ENCODE measurements at regions of chr9 and their contacts with region 1.

Region 1: DNA sequence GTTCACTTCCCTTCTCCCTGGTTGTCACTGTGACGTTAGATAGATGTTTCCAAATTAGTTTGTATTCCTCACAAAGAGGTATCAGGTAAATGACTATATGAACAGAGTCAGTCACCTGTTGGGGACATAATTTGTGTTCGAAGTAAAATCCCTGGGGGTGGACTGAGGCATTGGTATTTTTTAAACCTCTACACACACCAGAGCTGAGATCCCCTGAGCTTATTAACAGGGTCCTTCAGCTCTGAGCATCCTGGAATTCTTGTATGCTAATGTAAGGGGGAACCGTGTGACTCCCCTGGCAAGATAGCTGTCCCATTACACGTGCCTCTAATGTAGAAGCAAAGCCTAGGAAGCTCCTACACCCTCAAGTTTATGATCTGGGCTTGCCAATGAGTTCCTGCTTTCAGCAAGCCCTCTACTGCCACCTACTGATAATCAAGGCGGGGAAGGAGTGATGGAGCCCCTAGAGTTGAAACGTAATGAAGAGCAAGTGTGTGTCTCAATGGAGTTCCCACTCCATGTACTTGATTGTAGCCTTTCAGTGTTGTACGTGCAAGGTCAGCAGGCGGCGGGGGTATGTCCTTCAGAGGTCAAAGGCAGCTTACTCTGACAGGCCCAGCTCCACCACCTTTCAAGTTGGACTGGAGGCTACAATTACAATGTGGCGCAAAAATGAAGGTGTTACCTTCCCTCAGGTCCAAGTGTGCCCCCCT is 14.4 kb downstream of the PRKACG start:
- DNase-seq: peak; percentile 60
- ATAC-seq: peak; percentile 93 to 95

Region 2: GRCh38 chr9:68779558-68780384 is 219.8 kb before region 1 on chr9:
- intact Hi-C with region 1: loop called in 1 of 2 experiments (anchors 10 kb)
- DNase-seq: peak; percentile 96
- ATAC-seq: peak; percentile 96

Region 3: DNA sequence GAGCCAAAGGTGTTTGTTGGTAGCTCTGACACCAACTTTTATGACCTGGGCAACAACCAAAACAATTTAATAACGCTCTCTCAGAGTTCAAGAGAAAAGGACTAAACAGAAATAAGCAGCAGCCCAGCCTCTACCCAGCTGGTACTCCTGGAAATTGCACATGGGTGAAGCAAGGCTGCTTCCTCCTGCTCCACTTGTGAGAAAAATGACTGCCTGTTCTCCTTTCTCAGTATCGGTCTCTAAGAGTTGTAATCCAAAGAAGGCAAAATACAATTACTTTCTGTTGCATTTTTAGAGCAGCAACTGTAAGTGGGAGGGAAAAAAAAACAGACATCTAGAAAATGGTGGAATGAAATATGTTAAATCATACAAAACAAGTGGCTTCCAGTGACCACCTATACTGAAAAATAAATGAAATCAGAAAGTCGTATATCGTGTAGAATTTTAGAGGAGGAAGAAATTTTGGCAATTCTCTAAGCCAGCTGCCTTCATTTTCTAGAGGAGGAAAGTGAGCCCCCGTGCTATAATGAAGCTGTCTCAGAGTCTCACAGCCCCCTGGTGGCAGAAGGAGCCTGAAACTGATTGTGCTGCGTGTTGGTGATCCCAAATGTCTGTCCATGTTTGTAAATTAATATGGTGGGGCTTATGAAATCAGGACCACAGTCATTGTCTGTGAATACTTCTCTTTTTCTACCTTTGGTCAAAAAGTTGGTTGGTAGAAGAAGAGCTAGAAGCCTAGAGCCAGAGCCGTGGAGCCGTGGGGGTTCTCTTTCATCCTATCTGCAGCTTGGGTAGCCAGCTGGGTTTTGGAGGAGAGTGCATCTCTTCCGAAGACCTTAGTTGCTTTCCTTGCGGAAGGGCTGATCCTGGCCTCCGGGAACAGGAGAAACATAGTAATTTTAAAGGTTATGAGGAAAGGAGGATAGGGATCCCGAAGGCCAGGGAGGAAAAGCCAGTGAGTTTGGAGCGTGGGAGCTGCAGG is 154.6 kb before region 1 on chr9:
- intact Hi-C with region 1: loop called in 1 of 2 experiments (anchors 10 kb)
- DNase-seq: peak; percentile 60
- ATAC-seq: peak; percentile 70

Region 4: GRCh38 chr9:68919661-68920060 is 79.9 kb before region 1 on chr9:
- intact Hi-C with region 1: loop called in 1 of 2 experiments (anchors 10 kb)
- DNase-seq: no peak
- ATAC-seq: no peak

Measured in left cardiac atrium (tissue), 4 donors.